ENCODE measurements at regions of chrX and their contacts with region 1.

Region 1: DNA sequence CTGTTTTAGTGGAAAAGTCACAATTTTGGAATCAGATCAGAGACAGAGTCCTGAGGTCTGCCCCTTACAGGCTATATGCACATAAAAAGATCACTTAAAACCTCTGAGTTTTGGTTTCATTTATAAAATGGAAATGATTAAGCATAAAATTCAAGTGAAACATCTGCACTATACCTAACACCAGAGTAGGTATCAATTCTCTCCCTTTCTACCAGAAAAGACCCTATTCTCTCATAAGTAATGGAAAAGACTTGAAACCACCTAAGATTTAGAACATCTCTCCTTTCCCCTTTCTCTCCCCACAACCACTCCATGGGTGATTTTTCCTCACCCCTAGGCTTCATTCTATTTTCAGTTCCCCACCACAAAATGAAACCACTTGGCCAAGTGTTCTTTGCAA is 907 bp downstream of the LHFPL1 start:
- DNase-seq: no peak
- ATAC-seq: peak; percentile 73
- H3K4me3 ChIP-seq: no peak overlapping the region; the same call in 1 of the 2 replicates
- H3K27ac ChIP-seq: peak overlapping the region; percentile 76
- H3K4me1 ChIP-seq: no peaks in the 10 kb centered on the region
- H3K27me3 ChIP-seq: no peaks in the 10 kb centered on the region
- CTCF ChIP-seq: no peak
- EP300 ChIP-seq: no peak
- POLR2A ChIP-seq: no peak
- RAD21 ChIP-seq: no peak

Region 2: GRCh38 chrX:112662559-112663427 is 16.0 kb before region 1 on chrX:
- CTCF ChIA-PET with region 1: interaction called, 7 read pairs
- POLR2A ChIA-PET with region 1: interaction called, 11 read pairs
- RAD21 ChIA-PET with region 1: interaction called, 18 read pairs
- SMC1A ChIA-PET with region 1: interaction called, 10 read pairs
- in situ Hi-C with region 1: no loop called
- intact Hi-C with region 1: no loop called
- DNase-seq: no peak
- ATAC-seq: peak; percentile 58
- H3K4me3 ChIP-seq: no peak overlapping the region
- H3K27ac ChIP-seq: peak overlapping the region; percentile 49
- H3K4me1 ChIP-seq: peaks cover 16% of the 10 kb centered on the region
- H3K27me3 ChIP-seq: no peaks in the 10 kb centered on the region
- CTCF ChIP-seq: no peak
- EP300 ChIP-seq: peak in 1 of 2 experiments; percentile 29; a peak in 1 of 4 replicates
- POLR2A ChIP-seq: no peak
- RAD21 ChIP-seq: no peak

Region 3: GRCh38 chrX:112668476-112669409 is 10.1 kb before region 1 on chrX:
- CTCF ChIA-PET with region 1: interaction called, 7 read pairs
- POLR2A ChIA-PET with region 1: interaction called, 4 read pairs
- RAD21 ChIA-PET with region 1: interaction called, 18 read pairs
- SMC1A ChIA-PET with region 1: interaction called, 9 read pairs
- in situ Hi-C with region 1: no loop called
- intact Hi-C with region 1: no loop called
- DNase-seq: no peak
- ATAC-seq: peak; percentile 53
- H3K4me3 ChIP-seq: peak overlapping the region; percentile 32; the same call in 1 of the 2 replicates
- H3K27ac ChIP-seq: peak overlapping the region; percentile 62
- H3K4me1 ChIP-seq: peaks cover 27% of the 10 kb centered on the region
- H3K27me3 ChIP-seq: no peaks in the 10 kb centered on the region
- CTCF ChIP-seq: no peak
- EP300 ChIP-seq: no peak
- POLR2A ChIP-seq: no peak
- RAD21 ChIP-seq: no peak

Region 4: DNA sequence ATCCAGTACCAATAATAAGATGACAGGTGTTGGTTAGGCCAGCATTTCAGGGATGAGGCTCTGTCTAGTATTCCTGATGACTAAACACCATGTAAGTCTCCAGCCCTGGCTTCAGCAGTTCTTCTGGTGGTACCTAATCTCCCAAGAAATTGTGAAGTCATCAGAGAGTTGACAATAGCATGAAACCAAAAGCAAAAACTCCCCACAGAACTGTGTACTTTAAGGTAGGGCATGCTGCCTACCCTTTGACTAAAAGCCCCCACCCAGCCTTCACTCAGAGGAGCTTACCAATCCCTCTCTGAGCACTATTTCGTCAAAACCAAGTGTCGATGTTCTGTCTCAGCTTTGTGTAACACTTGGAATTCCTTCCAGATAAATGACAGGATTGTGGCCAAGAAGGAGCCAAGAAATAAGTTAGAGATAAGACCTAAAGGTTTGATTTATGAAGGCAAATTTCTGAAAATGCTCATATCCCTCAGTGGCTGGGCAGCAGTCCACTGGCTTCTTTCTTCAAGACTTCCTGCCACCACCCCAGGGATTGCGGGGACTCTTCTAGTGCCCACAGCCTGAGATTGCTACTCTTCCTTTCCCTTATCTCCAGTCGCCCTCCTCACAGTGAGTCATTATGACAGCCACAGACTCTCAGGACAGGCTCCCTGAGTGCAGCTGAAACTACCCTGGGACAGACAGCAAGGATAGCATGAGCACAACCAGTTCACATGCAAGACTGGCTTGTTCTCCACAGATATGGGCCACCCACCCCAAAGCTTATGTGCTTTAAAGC is 68.2 kb after region 1 on chrX:
- CTCF ChIA-PET with region 1: no interaction called
- POLR2A ChIA-PET with region 1: no interaction called
- RAD21 ChIA-PET with region 1: no interaction called
- SMC1A ChIA-PET with region 1: no interaction called
- in situ Hi-C with region 1: no loop called
- intact Hi-C with region 1: no loop called
- DNase-seq: no peak
- ATAC-seq: no peak; the same call in 2 of the 3 replicates
- H3K4me3 ChIP-seq: no peak overlapping the region
- H3K27ac ChIP-seq: no peak overlapping the region
- H3K4me1 ChIP-seq: no peaks in the 10 kb centered on the region
- H3K27me3 ChIP-seq: no peaks in the 10 kb centered on the region
- CTCF ChIP-seq: no peak
- EP300 ChIP-seq: no peak
- POLR2A ChIP-seq: no peak
- RAD21 ChIP-seq: no peak

Region 5: GRCh38 chrX:112841114-112841819 is 162.4 kb after region 1 on chrX:
- CTCF ChIA-PET with region 1: no interaction called
- POLR2A ChIA-PET with region 1: no interaction called
- RAD21 ChIA-PET with region 1: no interaction called
- SMC1A ChIA-PET with region 1: no interaction called
- in situ Hi-C with region 1: no loop called
- intact Hi-C with region 1: loop called (anchors 5 kb)
- DNase-seq: no peak
- ATAC-seq: peak; percentile 95
- H3K4me3 ChIP-seq: peak overlapping the region; percentile 80
- H3K27ac ChIP-seq: peak overlapping the region; percentile 35; the same call in 1 of the 2 replicates
- H3K4me1 ChIP-seq: no peaks in the 10 kb centered on the region; the same call in 1 of the 2 replicates
- H3K27me3 ChIP-seq: no peaks in the 10 kb centered on the region
- CTCF ChIP-seq: no peak
- EP300 ChIP-seq: no peak
- POLR2A ChIP-seq: no peak
- RAD21 ChIP-seq: no peak

Region 6: DNA sequence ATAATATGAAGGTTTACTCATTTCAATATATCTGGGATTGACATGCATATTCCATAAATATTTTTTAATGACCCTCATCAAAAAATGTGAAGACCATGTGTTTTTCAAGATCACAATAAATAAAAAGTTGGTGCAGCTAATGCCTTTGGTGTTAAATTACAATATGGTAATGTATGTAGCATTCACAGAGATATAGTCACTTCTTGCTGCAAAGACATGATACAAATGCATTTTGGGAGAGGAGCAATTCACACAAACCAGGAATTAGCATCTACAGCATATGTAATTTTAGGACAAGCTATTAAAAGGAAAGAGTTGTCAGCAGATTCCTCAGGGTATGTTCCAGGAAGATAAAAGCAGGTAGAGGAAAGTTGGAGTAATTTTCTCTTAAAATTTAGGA is 1170.6 kb after region 1 on chrX:
- CTCF ChIA-PET with region 1: no interaction called
- POLR2A ChIA-PET with region 1: no interaction called
- RAD21 ChIA-PET with region 1: no interaction called
- SMC1A ChIA-PET with region 1: no interaction called
- in situ Hi-C with region 1: no loop called
- intact Hi-C with region 1: no loop called
- DNase-seq: no peak
- ATAC-seq: no peak
- H3K4me3 ChIP-seq: no peak overlapping the region
- H3K27ac ChIP-seq: no peak overlapping the region
- H3K4me1 ChIP-seq: no peaks in the 10 kb centered on the region
- H3K27me3 ChIP-seq: no peaks in the 10 kb centered on the region
- CTCF ChIP-seq: no peak
- EP300 ChIP-seq: no peak
- POLR2A ChIP-seq: no peak
- RAD21 ChIP-seq: no peak

Measured in GM12878 (cell line).